Sigmoid colon (tissue), 7 donors: ENCODE measurements at regions of chr2 and their contacts with region 1.

Region 1: DNA sequence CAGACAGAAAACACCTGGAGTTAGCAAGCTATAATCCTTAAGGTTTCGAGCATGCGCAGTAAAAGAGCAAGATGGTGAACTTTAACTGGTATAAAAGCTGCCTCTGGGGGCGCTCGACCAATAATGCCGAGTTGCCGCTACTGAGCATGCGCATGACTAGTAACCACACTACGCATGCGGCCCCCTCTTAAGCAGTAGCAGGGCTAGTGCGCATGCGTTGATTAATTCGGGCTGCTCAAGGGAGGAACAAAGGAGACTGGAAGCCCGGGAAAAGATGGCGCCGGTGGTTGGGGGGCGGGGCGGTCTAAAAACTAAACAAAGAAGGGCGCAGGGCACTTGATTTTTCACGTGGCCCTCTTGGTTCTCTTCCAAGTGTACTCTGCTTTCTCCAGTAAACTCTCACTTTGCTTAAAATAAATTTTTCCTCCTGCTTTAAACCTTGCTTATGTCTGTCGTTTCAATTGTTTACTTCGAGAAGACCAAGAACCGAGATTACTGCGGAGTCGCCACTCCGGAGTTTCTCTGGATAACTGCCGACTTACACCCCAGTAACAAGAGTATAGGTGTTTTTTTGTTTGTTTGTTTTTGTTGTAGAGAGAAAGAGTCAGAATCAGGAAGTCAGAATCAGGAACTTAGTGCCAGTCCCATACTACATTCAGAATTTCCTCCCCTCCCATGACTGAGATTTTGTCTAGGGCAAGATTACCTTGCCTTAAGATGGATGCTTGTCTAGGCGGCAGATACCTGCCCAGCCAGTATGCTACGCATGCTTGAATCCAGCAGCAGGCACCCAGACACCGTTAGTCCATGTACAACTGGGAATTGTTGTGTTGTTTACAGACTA is 5.8 kb downstream of the XRCC5 start:
- DNase-seq: peak; percentile 99
- H3K4me3 ChIP-seq: peak overlapping the region; percentile 44 to 55 (median 53)
- H3K27ac ChIP-seq: peak overlapping the region; percentile 79 to 85 (median 80)
- H3K4me1 ChIP-seq: peaks cover 0 to 54% (median 26%) of the 10 kb centered on the region in 4 donors
- H3K27me3 ChIP-seq: no peaks in the 10 kb centered on the region
- CTCF ChIP-seq: peak; percentile 77 to 85 (median 80)
- EP300 ChIP-seq: no peak
- POLR2A ChIP-seq: no peak

Region 2: GRCh38 chr2:215900843-215901242 is 214.1 kb before region 1 on chr2:
- intact Hi-C with region 1: no loop called
- DNase-seq: no peak
- H3K4me3 ChIP-seq: no peak overlapping the region
- H3K27ac ChIP-seq: no peak overlapping the region
- H3K4me1 ChIP-seq: no peaks in the 10 kb centered on the region
- H3K27me3 ChIP-seq: no peaks in the 10 kb centered on the region
- CTCF ChIP-seq: no peak
- EP300 ChIP-seq: no peak
- POLR2A ChIP-seq: no peak

Region 3: GRCh38 chr2:216412022-216412999 is 297.4 kb after region 1 on chr2 and contains the start of gene SMARCAL1:
- intact Hi-C with region 1: loop called (anchors 5 kb)
- DNase-seq: peak; percentile 99
- H3K4me3 ChIP-seq: peak within 1 kb of the TSS; percentile 66 to 80 (median 73)
- H3K27ac ChIP-seq: peak within 1 kb of the TSS; percentile 90 to 96 (median 92)
- H3K4me1 ChIP-seq: peaks cover 0 to 11% (median 9%) of the 10 kb centered on the region in 4 donors
- H3K27me3 ChIP-seq: no peaks in the 10 kb centered on the region
- CTCF ChIP-seq: no peak
- EP300 ChIP-seq: no peak
- POLR2A ChIP-seq: no peak
- total RNA-seq, gene SMARCAL1: 7.5 to 21.3 (median 16.8) TPM